CD14-positive monocyte (primary cell): ENCODE measurements at regions of chr12 and their contacts with region 1.

Region 1: GRCh38 chr12:112096667-112097066 is 11.9 kb downstream of the NAA25 start:
- DNase-seq: peak in 1 of 3 donors; percentile 56
- H3K4me3 ChIP-seq: no peak overlapping the region
- H3K4me3 Mint-ChIP-seq: no peak overlapping the region
- H3K27ac ChIP-seq: peak overlapping the region in 1 of 2 donors; percentile 75
- H3K27ac Mint-ChIP-seq: peak overlapping the region in 6 of 7 donors; percentile 13 to 85 (median 79)
- H3K4me1 ChIP-seq: peaks cover 13 to 18% of the 10 kb centered on the region in 2 donors
- H3K4me1 Mint-ChIP-seq: peaks cover 19% of the 10 kb centered on the region
- H3K27me3 ChIP-seq: no peaks in the 10 kb centered on the region
- H3K27me3 Mint-ChIP-seq: peaks cover 0 to 2% (median 0%) of the 10 kb centered on the region in 3 donors
- CTCF ChIP-seq: no peak

Region 2: DNA sequence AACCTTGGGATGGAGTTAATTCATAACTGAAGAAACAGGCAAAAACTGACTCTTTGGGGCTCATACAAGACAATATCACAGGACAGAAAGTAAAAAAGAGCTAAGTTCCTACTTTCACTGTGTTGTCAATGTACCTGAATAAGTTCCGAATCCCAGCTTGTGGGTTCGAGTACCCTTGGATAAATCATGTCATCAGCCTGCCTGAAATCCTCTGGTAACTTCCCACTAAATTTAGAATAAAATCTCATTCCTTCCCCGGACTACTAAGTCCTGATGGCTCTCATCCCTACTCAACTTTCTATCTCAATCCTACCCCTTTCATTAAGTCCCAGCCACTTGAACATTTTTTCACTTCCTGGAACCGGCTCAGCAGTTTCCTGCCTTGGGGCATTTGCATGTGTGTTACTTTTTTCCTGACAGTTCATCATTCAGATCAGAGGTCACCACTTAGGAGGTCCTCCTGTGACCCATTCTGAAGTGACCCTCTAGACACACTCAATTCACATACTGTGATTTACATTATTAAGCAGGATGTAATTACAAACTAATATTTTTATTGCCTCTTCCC is 70.8 kb before region 1 on chr12:
- intact Hi-C with region 1: no loop called
- DNase-seq: no peak
- H3K4me3 ChIP-seq: no peak overlapping the region
- H3K4me3 Mint-ChIP-seq: no peak overlapping the region
- H3K27ac ChIP-seq: peak overlapping the region in 1 of 2 donors; percentile 63
- H3K27ac Mint-ChIP-seq: peak overlapping the region in 5 of 7 donors; percentile 26 to 88 (median 70)
- H3K4me1 ChIP-seq: peaks cover 10 to 11% of the 10 kb centered on the region in 2 donors
- H3K4me1 Mint-ChIP-seq: peaks cover 19% of the 10 kb centered on the region
- H3K27me3 ChIP-seq: no peaks in the 10 kb centered on the region
- H3K27me3 Mint-ChIP-seq: no peaks in the 10 kb centered on the region
- CTCF ChIP-seq: no peak

Region 3: DNA sequence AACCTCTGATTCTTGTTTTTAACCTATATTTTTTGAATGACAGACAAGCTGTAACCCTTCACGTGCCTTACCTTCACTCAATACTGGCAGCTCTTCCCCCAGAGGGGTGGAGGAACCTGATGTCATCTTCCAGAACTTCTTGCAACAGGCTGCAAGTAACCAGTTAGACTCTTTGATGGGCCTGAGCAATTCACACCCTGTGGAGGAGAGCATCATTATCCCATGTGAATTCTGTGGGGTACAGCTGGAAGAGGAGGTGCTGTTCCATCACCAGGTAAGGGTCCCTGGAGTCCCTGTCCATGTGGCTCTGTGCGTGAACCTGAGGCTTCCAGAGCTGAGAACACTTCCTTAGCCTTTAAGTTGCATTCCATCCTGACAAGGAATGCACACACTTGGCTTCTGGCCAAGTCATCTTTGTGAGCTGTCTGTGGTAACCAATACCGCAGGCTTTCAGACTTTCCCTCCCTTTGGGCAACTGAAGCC is 51.4 kb after region 1 on chr12:
- intact Hi-C with region 1: loop called in 1 of 2 experiments (anchors 10 kb)
- DNase-seq: no peak
- H3K4me3 ChIP-seq: no peak overlapping the region
- H3K4me3 Mint-ChIP-seq: no peak overlapping the region
- H3K27ac ChIP-seq: peak overlapping the region in 1 of 2 donors; percentile 52
- H3K27ac Mint-ChIP-seq: peak overlapping the region in 3 of 7 donors; percentile 16 to 67 (median 41)
- H3K4me1 ChIP-seq: peaks cover 4 to 22% of the 10 kb centered on the region in 2 donors
- H3K4me1 Mint-ChIP-seq: peaks cover 18% of the 10 kb centered on the region
- H3K27me3 ChIP-seq: no peaks in the 10 kb centered on the region
- H3K27me3 Mint-ChIP-seq: no peaks in the 10 kb centered on the region
- CTCF ChIP-seq: no peak

Region 4: GRCh38 chr12:112161711-112162110 is 65.0 kb after region 1 on chr12:
- intact Hi-C with region 1: no loop called
- DNase-seq: no peak
- H3K4me3 ChIP-seq: no peak overlapping the region
- H3K4me3 Mint-ChIP-seq: no peak overlapping the region
- H3K27ac ChIP-seq: peak overlapping the region in 1 of 2 donors; percentile 51
- H3K27ac Mint-ChIP-seq: peak overlapping the region in 2 of 7 donors; percentile 33 to 52
- H3K4me1 ChIP-seq: no peaks in the 10 kb centered on the region
- H3K4me1 Mint-ChIP-seq: no peaks in the 10 kb centered on the region
- H3K27me3 ChIP-seq: no peaks in the 10 kb centered on the region
- H3K27me3 Mint-ChIP-seq: no peaks in the 10 kb centered on the region
- CTCF ChIP-seq: no peak